Naive thymus-derived CD4-positive, alpha-beta T cell (primary cell): ENCODE measurements at regions of chr5 and their contacts with region 1.

Region 1: DNA sequence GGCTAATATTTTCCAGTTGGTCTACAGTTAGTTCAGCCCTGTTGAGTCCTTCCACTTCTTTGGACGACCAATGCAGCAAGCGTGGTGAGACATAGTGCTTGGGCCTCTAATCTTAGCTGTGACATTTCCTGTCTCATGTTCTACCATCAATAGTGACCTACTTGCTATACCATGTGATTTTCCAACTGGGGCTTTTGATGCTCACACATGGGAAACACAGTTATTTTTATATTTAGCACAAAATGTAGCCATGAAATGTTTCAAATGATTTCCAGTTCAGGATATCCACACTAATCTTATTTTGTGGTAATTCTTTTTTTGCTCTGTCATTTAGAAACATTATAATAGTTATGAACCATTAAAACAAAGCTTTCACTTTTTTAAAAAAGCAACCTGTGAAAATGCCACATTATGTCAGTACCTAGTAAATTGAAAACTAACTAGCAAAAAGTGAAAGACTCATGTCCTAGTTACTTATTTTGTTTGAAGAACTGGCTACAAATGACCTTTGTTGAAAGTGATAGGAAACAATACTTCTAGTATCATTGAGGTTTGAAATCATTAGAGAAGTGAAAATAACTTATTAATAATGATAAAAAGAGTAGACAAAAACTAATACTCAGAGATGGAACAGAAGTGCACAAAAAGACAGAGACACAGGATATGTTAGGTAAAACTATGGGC is 18.3 kb downstream of the MARCHF3 start:
- DNase-seq: no peak
- ATAC-seq: no peak
- H3K4me3 ChIP-seq: no peak overlapping the region
- H3K4me3 Mint-ChIP-seq: no peak overlapping the region
- H3K27ac ChIP-seq: no peak overlapping the region
- H3K27ac Mint-ChIP-seq: peak overlapping the region in 1 of 9 donors; percentile 53
- H3K4me1 ChIP-seq: peaks cover 0 to 18% of the 10 kb centered on the region in 2 donors
- H3K4me1 Mint-ChIP-seq: peaks cover 5 to 47% (median 31%) of the 10 kb centered on the region in 7 donors
- H3K27me3 ChIP-seq: no peaks in the 10 kb centered on the region
- H3K27me3 Mint-ChIP-seq: peaks cover 0 to 3% (median 0%) of the 10 kb centered on the region in 5 donors

Region 2: GRCh38 chr5:126998201-126998631 is 13.9 kb before region 1 on chr5:
- CTCF ChIA-PET with region 1: no interaction called
- POLR2A ChIA-PET with region 1: interaction called, 4 read pairs
- intact Hi-C with region 1: loop called in 1 of 2 experiments (anchors 2 kb)
- DNase-seq: no peak
- ATAC-seq: no peak
- H3K4me3 ChIP-seq: no peak overlapping the region
- H3K4me3 Mint-ChIP-seq: no peak overlapping the region
- H3K27ac ChIP-seq: no peak overlapping the region
- H3K27ac Mint-ChIP-seq: no peak overlapping the region
- H3K4me1 ChIP-seq: no peaks in the 10 kb centered on the region
- H3K4me1 Mint-ChIP-seq: peaks cover 6 to 46% (median 39%) of the 10 kb centered on the region in 7 donors
- H3K27me3 ChIP-seq: no peaks in the 10 kb centered on the region
- H3K27me3 Mint-ChIP-seq: peaks cover 0 to 3% (median 0%) of the 10 kb centered on the region in 5 donors